Aorta (tissue), 5 donors: ENCODE measurements at regions of chr1 and their contacts with region 1.

Region 1: DNA sequence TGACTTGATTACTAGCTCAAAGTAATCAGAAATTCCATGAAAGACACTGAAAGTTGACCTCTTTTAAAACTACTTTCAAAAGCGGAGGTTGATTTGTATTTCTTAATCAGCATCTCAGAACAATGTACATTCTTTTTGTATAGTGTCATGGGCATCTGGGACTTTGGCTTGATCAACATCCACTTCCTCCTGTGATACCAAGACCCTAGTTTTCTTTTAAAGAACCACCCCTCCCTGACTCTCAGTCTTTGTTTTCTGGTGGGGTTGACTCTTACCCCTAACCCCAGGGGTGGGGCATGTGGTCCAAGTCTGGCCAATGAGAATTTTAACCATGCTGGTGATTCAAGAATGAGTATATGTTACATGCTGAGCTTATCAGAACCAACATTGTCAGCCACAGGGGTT is 21.7 kb upstream of the IRF2BP2 start:
- DNase-seq: no peak
- ATAC-seq: peak; percentile 41
- H3K4me3 ChIP-seq: no peak overlapping the region
- H3K27ac ChIP-seq: no peak overlapping the region
- H3K4me1 ChIP-seq: no peaks in the 10 kb centered on the region
- H3K27me3 ChIP-seq: no peaks in the 10 kb centered on the region

Region 2: GRCh38 chr1:234553156-234553863 is 78.4 kb before region 1 on chr1:
- intact Hi-C with region 1: no loop called
- DNase-seq: no peak
- ATAC-seq: peak; percentile 51
- H3K4me3 ChIP-seq: no peak overlapping the region
- H3K27ac ChIP-seq: no peak overlapping the region
- H3K4me1 ChIP-seq: no peaks in the 10 kb centered on the region
- H3K27me3 ChIP-seq: no peaks in the 10 kb centered on the region

Region 3: DNA sequence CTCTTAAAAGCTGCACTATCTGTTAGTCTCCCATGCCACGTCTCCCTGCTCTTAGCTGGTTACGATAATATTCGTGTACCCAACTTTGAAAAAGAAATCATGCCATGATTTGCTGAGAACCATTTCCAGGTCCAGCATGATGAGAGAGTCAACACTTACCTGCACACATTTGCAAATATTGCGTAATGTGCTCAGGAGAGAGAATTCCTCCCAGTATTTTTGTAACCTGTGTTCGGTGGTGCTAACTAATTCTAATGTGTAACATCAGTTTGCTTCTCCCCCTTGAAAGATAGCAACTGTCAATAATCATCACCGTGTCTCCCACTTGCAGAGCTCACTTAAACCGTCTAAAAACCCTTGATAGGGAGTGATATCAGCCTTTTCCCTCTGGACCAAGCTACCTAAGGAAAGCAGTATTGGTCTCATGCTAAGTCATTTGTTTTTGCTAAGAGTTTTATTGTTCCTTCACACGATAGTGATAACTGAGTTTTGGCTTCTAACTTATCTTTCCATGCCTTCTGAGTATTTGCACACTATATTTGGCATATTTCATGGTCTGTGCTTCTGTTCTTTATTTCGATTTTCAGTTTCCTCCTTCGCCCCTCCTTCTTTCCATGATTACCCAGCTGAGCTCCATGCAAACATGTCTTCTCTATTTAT is 39.4 kb after region 1 on chr1:
- intact Hi-C with region 1: loop called in 1 of 2 experiments (anchors 5 kb)
- DNase-seq: no peak
- ATAC-seq: no peak
- H3K4me3 ChIP-seq: no peak overlapping the region
- H3K27ac ChIP-seq: no peak overlapping the region
- H3K4me1 ChIP-seq: no peaks in the 10 kb centered on the region
- H3K27me3 ChIP-seq: no peaks in the 10 kb centered on the region